Activated CD8-positive, alpha-beta T cell treated with anti-CD3 and anti-CD28 coated beads, Interleukin-2, amount 10 ng/mL, durations not matched to agents 7 days and 5 days (primary cell): ENCODE measurements at regions of chr5 and their contacts with region 1.

Region 1: GRCh38 chr5:54844905-54845566 is 140.4 kb downstream of the ESM1 start:
- DNase-seq: no peak
- ATAC-seq: peak; percentile 49
- H3K4me3 Mint-ChIP-seq: peak overlapping the region; percentile 20
- H3K27ac Mint-ChIP-seq: no peak overlapping the region
- H3K4me1 Mint-ChIP-seq: peaks cover 15% of the 10 kb centered on the region
- H3K27me3 Mint-ChIP-seq: peaks cover 13% of the 10 kb centered on the region

Region 2: GRCh38 chr5:54492178-54492577 is 352.9 kb before region 1 on chr5:
- CTCF ChIA-PET with region 1: interaction called, 15 read pairs
- POLR2A ChIA-PET with region 1: no interaction called
- DNase-seq: no peak
- ATAC-seq: no peak
- H3K4me3 Mint-ChIP-seq: no peak overlapping the region
- H3K27ac Mint-ChIP-seq: no peak overlapping the region
- H3K4me1 Mint-ChIP-seq: no peaks in the 10 kb centered on the region
- H3K27me3 Mint-ChIP-seq: peaks cover 13% of the 10 kb centered on the region

Region 3: DNA sequence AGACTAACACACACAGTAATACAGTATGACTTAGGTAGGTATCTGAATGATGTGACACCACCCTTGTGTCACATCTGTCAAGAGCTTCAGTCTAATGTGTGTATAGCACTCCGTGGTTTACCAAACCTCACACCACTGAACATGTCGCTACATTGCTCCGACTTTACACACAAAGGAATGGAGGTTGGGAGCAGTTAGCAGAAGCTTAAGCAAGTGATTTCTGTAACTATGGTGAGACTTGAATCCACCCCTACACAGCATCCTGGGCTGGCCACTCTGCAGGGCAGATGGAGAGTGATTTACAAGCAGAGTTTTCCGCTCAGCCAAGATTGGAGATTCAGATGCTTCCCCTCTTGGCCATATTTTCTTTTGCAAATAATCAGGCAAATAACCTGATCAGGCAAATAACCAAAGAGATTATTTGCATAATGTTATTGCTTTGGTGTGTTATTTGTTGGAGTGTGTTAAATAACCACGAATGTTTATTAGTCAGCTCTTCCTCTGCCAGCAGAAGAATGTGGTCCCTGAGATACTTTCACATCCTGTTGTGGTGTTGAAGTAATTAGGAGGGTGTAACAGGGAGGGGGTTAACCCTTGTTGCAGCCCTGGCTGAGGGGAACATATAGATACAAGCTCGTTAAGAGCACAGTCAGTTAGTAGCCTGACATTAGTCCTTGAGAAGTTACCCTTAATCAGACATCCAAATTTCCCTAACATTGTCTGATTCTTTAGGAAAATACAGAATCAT is 234.7 kb before region 1 on chr5:
- CTCF ChIA-PET with region 1: interaction called, 13 read pairs
- POLR2A ChIA-PET with region 1: no interaction called
- DNase-seq: peak; percentile 73
- ATAC-seq: peak; percentile 91
- H3K4me3 Mint-ChIP-seq: peak overlapping the region; percentile 61
- H3K27ac Mint-ChIP-seq: peak overlapping the region; percentile 93
- H3K4me1 Mint-ChIP-seq: peaks cover 29% of the 10 kb centered on the region
- H3K27me3 Mint-ChIP-seq: no peaks in the 10 kb centered on the region

Region 4: DNA sequence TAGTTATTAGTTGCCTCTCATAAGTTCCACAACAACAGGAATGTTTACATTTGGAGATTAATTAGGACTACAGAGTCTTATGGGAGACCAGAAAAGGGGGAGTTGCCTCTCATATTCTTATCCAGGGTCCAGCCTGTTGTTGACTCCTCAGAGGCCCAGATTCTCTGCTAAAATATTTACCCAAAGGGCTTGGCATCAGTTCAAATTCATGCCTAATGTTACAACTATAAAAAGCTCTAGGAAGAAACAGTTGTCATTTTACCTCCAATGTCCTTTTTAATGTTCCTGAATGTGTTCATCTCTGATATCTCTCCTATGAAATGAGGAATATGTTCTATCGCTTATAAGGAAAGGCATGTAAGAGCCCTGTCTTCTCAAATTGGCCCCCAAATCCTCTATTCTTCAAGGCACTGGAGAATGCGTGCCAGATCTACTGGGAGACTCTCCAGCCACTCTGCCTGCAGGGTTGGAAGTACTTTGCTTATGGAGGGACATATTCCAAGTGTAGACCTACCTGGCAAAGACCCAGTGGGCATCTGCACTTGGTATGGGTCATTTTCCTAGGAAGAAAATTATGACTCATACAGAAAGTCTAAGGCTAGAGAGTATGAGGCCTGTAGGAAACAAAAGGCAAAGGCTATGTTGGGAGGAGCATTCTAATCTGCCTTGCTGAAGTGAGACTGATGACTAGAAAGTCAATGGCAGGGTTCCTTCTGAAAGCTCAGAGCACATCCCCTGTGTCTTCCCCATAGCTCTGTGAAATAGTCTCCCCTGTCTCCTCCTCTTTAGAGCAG is 52.2 kb before region 1 on chr5:
- CTCF ChIA-PET with region 1: interaction called, 13 read pairs
- POLR2A ChIA-PET with region 1: no interaction called
- DNase-seq: no peak
- ATAC-seq: no peak
- H3K4me3 Mint-ChIP-seq: no peak overlapping the region
- H3K27ac Mint-ChIP-seq: no peak overlapping the region
- H3K4me1 Mint-ChIP-seq: peaks cover 29% of the 10 kb centered on the region
- H3K27me3 Mint-ChIP-seq: peaks cover 9% of the 10 kb centered on the region

Region 5: GRCh38 chr5:54832858-54833257 is 12.2 kb before region 1 on chr5:
- CTCF ChIA-PET with region 1: interaction called, 17 read pairs
- POLR2A ChIA-PET with region 1: interaction called, 3 read pairs
- DNase-seq: no peak
- ATAC-seq: no peak
- H3K4me3 Mint-ChIP-seq: no peak overlapping the region
- H3K27ac Mint-ChIP-seq: no peak overlapping the region
- H3K4me1 Mint-ChIP-seq: no peaks in the 10 kb centered on the region
- H3K27me3 Mint-ChIP-seq: peaks cover 22% of the 10 kb centered on the region

Region 6: DNA sequence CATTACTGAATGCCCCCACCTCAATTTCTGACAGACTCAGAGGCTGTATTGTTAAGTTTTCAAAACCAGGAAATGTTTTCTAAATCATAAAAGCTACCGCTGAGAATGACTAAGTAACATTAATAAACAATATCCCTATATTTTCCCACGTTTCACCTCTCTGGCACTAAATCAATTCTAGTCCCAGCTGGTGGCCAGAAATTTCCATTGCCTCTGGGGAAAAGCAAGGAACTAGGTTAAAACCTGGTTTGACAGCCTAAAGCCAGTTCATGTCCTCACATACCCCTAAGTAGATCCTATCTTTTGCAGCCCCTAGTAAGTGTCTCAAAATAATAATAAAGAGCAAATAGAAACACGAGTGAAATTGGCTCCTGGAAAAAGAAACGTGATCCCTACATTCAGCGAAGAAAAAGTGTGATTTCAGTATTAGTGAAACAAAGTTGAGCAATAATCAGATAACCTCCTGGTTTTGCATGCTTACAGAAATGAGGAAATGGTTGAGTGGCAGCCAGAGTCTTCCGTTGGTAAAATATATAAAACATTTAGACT is 29.4 kb after region 1 on chr5:
- CTCF ChIA-PET with region 1: interaction called, 11 read pairs
- POLR2A ChIA-PET with region 1: no interaction called
- DNase-seq: no peak
- ATAC-seq: no peak
- H3K4me3 Mint-ChIP-seq: no peak overlapping the region
- H3K27ac Mint-ChIP-seq: no peak overlapping the region
- H3K4me1 Mint-ChIP-seq: no peaks in the 10 kb centered on the region
- H3K27me3 Mint-ChIP-seq: peaks cover 57% of the 10 kb centered on the region

Region 7: GRCh38 chr5:55123365-55123764 is 278.3 kb after region 1 on chr5:
- CTCF ChIA-PET with region 1: no interaction called
- POLR2A ChIA-PET with region 1: no interaction called
- DNase-seq: no peak
- ATAC-seq: no peak
- H3K4me3 Mint-ChIP-seq: no peak overlapping the region
- H3K27ac Mint-ChIP-seq: no peak overlapping the region
- H3K4me1 Mint-ChIP-seq: peaks cover 3% of the 10 kb centered on the region
- H3K27me3 Mint-ChIP-seq: peaks cover 2% of the 10 kb centered on the region

Region 8: DNA sequence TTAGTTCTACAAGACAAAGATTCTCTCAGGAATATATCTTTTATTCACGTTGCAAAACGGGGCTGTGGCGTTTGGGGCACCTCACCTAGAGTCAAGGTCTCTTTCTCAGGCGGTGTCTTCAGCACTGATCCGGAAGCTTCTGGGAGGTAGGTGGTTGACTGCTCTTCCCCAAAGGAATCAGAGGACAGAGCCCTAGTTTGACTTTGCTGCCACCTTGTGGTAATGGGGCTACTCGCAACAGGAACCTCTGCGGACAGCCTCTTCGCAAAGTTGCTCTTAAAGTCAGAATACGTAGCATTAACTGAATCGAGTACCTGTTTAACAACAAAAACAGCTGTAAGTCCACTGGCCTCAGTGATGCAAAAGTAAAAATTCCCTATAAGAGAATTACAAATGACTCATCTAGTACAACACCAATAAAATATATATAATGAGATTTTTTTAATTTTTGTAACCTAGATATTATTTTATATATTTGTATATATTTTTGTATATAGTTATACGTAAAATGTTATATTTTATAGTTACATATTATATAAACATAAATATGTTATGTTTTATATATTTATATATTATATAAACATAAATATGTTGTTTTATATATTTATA is 301.6 kb after region 1 on chr5:
- CTCF ChIA-PET with region 1: no interaction called
- POLR2A ChIA-PET with region 1: no interaction called
- DNase-seq: peak; percentile 91
- ATAC-seq: peak; percentile 82
- H3K4me3 Mint-ChIP-seq: peak overlapping the region; percentile 34
- H3K27ac Mint-ChIP-seq: peak overlapping the region; percentile 67
- H3K4me1 Mint-ChIP-seq: peaks cover 43% of the 10 kb centered on the region
- H3K27me3 Mint-ChIP-seq: peaks cover 21% of the 10 kb centered on the region

Region 9: GRCh38 chr5:56183506-56183905 is 1338.5 kb after region 1 on chr5:
- CTCF ChIA-PET with region 1: no interaction called
- POLR2A ChIA-PET with region 1: no interaction called
- DNase-seq: no peak
- ATAC-seq: no peak
- H3K4me3 Mint-ChIP-seq: no peak overlapping the region
- H3K27ac Mint-ChIP-seq: no peak overlapping the region
- H3K4me1 Mint-ChIP-seq: no peaks in the 10 kb centered on the region
- H3K27me3 Mint-ChIP-seq: peaks cover 3% of the 10 kb centered on the region